CD8-positive, alpha-beta memory T cell (primary cell): ENCODE measurements at regions of chr2 and their contacts with region 1.

Region 1: GRCh38 chr2:224927646-224928173 is 114.6 kb downstream of the DOCK10 start:
- DNase-seq: peak; percentile 48 to 88 (median 81)
- H3K4me3 ChIP-seq: no peak overlapping the region
- H3K4me3 Mint-ChIP-seq: peak overlapping the region; percentile 42 to 80 (median 64)
- H3K27ac ChIP-seq: peak overlapping the region; percentile 69
- H3K27ac Mint-ChIP-seq: peak overlapping the region; percentile 90 to 99 (median 96)
- H3K4me1 ChIP-seq: peaks cover 98% of the 10 kb centered on the region
- H3K4me1 Mint-ChIP-seq: peaks cover 96 to 100% (median 99%) of the 10 kb centered on the region in 3 donors
- H3K27me3 ChIP-seq: no peaks in the 10 kb centered on the region
- H3K27me3 Mint-ChIP-seq: no peaks in the 10 kb centered on the region

Region 2: DNA sequence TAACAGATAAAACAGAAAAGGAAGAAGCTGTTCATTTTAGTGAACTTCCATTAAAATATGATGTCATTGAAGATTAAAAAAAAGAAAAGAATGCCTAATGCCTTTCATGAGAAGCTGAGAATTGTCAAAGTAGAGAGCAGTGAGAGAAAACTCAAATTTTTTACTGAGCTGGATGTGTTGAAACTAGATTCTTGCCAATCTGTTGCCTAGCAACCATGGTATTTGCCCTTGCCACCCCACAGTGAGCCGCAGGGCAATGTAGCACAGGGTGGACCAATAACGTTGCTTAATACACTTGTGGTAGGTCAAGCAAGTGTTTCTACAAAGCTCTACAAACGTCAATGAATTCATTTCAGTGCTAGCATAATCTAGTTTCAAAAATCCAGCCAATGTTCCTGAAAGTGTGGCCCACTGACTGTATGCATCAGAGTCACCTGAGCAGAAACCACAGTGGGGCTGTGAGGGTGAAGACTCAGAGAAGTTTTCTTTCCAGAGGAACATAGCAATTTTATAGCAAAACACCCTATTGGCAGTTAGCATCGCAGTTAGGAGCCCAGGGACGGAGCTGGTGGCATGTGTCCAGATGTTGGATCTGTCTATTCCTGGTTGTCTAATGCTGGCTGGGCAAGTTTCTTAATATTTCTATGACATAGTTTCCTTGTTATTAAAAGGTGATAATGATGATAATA is 17.7 kb before region 1 on chr2:
- CTCF ChIA-PET with region 1: interaction called, 13 read pairs
- POLR2A ChIA-PET with region 1: interaction called, 3 read pairs
- DNase-seq: peak in 4 of 5 donors; percentile 8 to 58 (median 52)
- H3K4me3 ChIP-seq: no peak overlapping the region
- H3K4me3 Mint-ChIP-seq: peak overlapping the region in 3 of 7 donors; percentile 6 to 23 (median 23)
- H3K27ac ChIP-seq: no peak overlapping the region
- H3K27ac Mint-ChIP-seq: peak overlapping the region in 7 of 8 donors; percentile 19 to 80 (median 79)
- H3K4me1 ChIP-seq: peaks cover 23% of the 10 kb centered on the region
- H3K4me1 Mint-ChIP-seq: peaks cover 49 to 66% (median 65%) of the 10 kb centered on the region in 3 donors
- H3K27me3 ChIP-seq: no peaks in the 10 kb centered on the region
- H3K27me3 Mint-ChIP-seq: no peaks in the 10 kb centered on the region

Region 3: DNA sequence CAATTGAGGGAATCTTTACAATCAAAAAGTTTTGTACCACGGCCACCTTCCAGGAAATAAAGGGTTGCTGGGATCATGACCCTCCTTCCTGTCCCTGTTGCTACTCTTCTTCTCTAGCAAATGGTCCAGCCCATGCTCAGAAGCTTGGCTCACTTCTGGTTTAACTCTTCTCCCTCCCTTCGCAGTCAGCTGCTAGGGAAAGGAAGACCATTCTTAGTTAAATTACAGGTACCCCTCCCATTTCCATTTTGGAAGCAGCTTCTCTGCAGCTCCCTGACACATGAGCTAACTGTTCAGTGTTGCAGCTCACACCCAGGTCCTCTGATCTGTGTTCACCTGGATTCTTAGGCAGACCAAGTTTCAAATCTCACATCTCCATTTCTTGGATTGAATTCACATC is 14.2 kb after region 1 on chr2:
- CTCF ChIA-PET with region 1: interaction called, 11 read pairs
- POLR2A ChIA-PET with region 1: interaction called, 4 read pairs
- DNase-seq: no peak
- H3K4me3 ChIP-seq: no peak overlapping the region
- H3K4me3 Mint-ChIP-seq: peak overlapping the region in 6 of 7 donors; percentile 30 to 71 (median 59)
- H3K27ac ChIP-seq: no peak overlapping the region
- H3K27ac Mint-ChIP-seq: peak overlapping the region in 7 of 8 donors; percentile 29 to 88 (median 59)
- H3K4me1 ChIP-seq: peaks cover 74% of the 10 kb centered on the region
- H3K4me1 Mint-ChIP-seq: peaks cover 79 to 93% (median 92%) of the 10 kb centered on the region in 3 donors
- H3K27me3 ChIP-seq: no peaks in the 10 kb centered on the region
- H3K27me3 Mint-ChIP-seq: peaks cover 0 to 3% of the 10 kb centered on the region in 2 donors